ENCODE measurements at regions of chr3 and their contacts with region 1.

Region 1: GRCh38 chr3:89628856-89629665 is 521.6 kb downstream of the EPHA3 start:
- DNase-seq: no peak
- H3K4me3 ChIP-seq: no peak overlapping the region
- H3K4me3 Mint-ChIP-seq: no peak overlapping the region
- H3K27ac ChIP-seq: no peak overlapping the region
- H3K27ac Mint-ChIP-seq: no peak overlapping the region
- H3K4me1 ChIP-seq: no peaks in the 10 kb centered on the region
- H3K4me1 Mint-ChIP-seq: no peaks in the 10 kb centered on the region
- H3K27me3 ChIP-seq: no peaks in the 10 kb centered on the region
- H3K27me3 Mint-ChIP-seq: peaks cover 0 to 2% (median 0%) of the 10 kb centered on the region in 3 donors
- CTCF ChIP-seq: no peak

Region 2: GRCh38 chr3:89617706-89618105 is 11.4 kb before region 1 on chr3:
- intact Hi-C with region 1: loop called in 1 of 2 experiments (anchors 1 kb)
- DNase-seq: no peak
- H3K4me3 ChIP-seq: no peak overlapping the region
- H3K4me3 Mint-ChIP-seq: no peak overlapping the region
- H3K27ac ChIP-seq: no peak overlapping the region
- H3K27ac Mint-ChIP-seq: no peak overlapping the region
- H3K4me1 ChIP-seq: no peaks in the 10 kb centered on the region
- H3K4me1 Mint-ChIP-seq: no peaks in the 10 kb centered on the region
- H3K27me3 ChIP-seq: no peaks in the 10 kb centered on the region
- H3K27me3 Mint-ChIP-seq: no peaks in the 10 kb centered on the region
- CTCF ChIP-seq: no peak

Region 3: DNA sequence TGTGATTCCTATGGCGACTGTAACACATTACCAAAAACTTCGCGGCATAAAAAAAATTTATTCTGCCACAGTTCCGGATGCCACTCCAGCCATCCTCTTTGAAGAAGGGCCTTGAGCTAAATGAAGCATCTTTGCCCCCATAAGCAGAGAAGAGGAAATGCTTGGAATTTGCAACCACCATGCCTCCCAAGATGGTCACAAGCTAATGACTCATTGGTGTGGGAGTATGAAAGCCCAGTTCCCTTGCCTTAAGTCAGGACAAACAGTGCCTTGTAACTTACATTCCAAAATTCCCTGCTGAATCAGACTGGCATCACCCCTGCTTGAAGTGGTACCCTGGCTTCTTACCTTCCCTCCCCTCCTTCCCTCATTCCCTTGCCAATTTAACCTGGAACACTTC is 555.8 kb after region 1 on chr3:
- intact Hi-C with region 1: no loop called
- DNase-seq: no peak
- H3K4me3 ChIP-seq: no peak overlapping the region
- H3K4me3 Mint-ChIP-seq: no peak overlapping the region
- H3K27ac ChIP-seq: no peak overlapping the region
- H3K27ac Mint-ChIP-seq: no peak overlapping the region
- H3K4me1 ChIP-seq: no peaks in the 10 kb centered on the region
- H3K4me1 Mint-ChIP-seq: peaks cover 2% of the 10 kb centered on the region
- H3K27me3 ChIP-seq: no peaks in the 10 kb centered on the region
- H3K27me3 Mint-ChIP-seq: peaks cover 0 to 2% (median 0%) of the 10 kb centered on the region in 3 donors
- CTCF ChIP-seq: no peak

Measured in CD14-positive monocyte (primary cell).